Right lobe of liver (tissue), 6 donors: ENCODE measurements at regions of chr4 and their contacts with region 1.

Region 1: DNA sequence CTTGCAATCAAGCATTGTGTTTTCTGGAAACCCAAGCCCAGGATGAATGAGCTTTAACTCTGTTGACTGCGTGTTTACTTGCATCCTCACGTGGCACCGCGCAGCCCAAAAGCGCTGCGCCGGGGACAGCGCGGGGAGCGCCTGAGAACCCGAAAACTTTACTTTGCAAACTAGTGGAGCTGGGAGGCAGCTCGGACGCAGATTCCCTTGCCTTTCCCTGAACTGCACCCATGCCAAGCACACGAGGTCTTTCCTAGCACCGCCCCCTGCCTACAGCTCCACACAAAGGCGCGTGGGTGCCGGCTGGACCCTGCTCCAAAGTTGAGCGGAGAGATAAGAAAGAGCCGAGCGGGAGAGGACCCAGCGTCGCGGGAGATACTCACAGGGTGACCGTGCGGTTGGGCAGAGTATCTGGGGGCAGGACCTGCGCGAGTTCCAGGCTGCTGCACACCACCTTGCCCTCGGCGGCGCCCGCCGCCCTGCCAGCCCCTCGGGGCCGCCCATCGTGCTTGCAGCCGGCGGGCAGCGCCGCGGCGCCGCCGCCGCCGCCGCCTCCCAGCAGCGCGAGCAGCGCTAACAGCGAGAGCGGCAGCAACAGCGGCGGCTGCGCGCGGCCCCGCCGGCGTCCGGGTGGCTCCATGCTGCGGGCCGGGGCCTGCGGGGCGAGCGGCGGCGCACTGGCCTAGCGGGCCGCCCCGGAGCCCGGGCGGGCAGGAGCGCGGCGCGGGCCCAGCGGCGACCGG is 550 bp downstream of the ADGRA3 start:
- DNase-seq: peak; percentile 77 to 90 (median 85)
- ATAC-seq: peak; percentile 72 to 83 (median 80)
- H3K4me3 ChIP-seq: peak overlapping the region; percentile 49 to 69 (median 62)
- H3K27ac ChIP-seq: peak overlapping the region; percentile 34 to 92 (median 85)
- H3K4me1 ChIP-seq: peaks cover 0 to 35% (median 8%) of the 10 kb centered on the region in 4 donors
- H3K27me3 ChIP-seq: no peaks in the 10 kb centered on the region
- CTCF ChIP-seq: peak in 1 of 4 donors; percentile 24
- POLR2A ChIP-seq: peak; percentile 20

Region 2: DNA sequence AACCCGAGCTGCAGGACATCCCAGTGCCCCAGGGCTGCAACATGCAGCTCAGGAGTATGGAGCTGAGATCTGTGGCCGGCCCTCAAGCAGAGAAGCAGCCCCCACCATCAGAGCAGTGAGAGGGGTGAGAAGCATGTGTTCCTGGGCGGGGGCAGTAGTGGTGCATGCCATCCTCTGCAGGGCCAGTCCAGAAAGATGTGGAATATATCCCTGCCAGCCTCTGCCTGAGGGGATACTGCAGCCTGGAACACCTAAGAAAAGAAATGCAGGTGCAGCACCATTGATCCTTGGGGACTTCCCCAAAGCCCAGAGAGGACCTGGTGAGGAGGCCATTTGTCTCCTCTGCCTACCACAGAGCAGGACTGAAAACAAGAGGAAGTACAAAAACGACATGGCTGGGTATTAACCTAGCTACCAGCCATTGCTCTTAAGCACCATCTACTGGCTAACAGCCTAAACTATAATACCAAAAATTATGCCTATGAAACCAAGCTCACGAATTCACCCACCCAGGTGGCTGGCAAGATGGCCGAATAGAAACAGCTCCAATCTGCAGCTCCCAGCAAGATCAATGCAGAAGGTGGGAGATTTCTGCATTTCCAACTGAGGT is 158.2 kb before region 1 on chr4:
- intact Hi-C with region 1: no loop called
- DNase-seq: no peak
- ATAC-seq: peak; percentile 44 to 77 (median 47)
- H3K4me3 ChIP-seq: no peak overlapping the region
- H3K27ac ChIP-seq: no peak overlapping the region
- H3K4me1 ChIP-seq: no peaks in the 10 kb centered on the region
- H3K27me3 ChIP-seq: no peaks in the 10 kb centered on the region
- CTCF ChIP-seq: peak in 2 of 4 donors; percentile 26
- POLR2A ChIP-seq: no peak

Region 3: DNA sequence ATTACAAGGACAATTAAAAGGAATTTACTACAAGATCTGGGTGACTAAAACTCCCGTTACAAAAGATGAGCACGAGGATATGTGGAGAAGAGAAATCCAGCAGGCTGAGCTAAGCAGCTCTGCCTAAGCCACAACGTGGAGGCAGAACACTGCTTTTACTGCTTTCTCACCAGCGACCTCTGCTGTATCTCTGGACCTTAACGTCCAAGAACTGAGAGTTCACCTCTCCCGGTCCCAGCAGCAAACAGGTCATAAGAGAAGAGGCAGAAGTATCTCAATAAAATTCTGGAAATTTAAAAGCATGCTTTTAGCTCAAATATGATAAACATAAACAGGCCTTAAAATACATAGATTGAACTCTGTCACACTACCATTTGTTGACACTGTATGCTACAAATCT is 80.4 kb before region 1 on chr4:
- intact Hi-C with region 1: loop called (anchors 5 to 10 kb)
- DNase-seq: peak in 2 of 3 donors; percentile 35 to 66
- ATAC-seq: peak; percentile 78 to 89 (median 86)
- H3K4me3 ChIP-seq: no peak overlapping the region
- H3K27ac ChIP-seq: peak overlapping the region in 2 of 3 donors; percentile 50 to 60
- H3K4me1 ChIP-seq: peaks cover 0 to 55% (median 9%) of the 10 kb centered on the region in 4 donors
- H3K27me3 ChIP-seq: no peaks in the 10 kb centered on the region
- CTCF ChIP-seq: peak; percentile 35 to 60 (median 46)
- POLR2A ChIP-seq: no peak